Activated T-helper 1 cell treated with anti-CD3 and anti-CD28 coated beads, Interleukin-12 subunit alpha, Interleukin-12 subunit beta, Interleukin-2, Interleukin-4 antibody, amounts not matched to agents 30 ng/mL and 10 ng/mL and 1 ng/mL, durations not matched to agents 14 hours and 24 hours and 36 hours (primary cell): ENCODE measurements at regions of chr17 and their contacts with region 1.

Region 1: GRCh38 chr17:81683584-81684237 is at the starts of genes ARL16 and HGS:
- DNase-seq: peak; percentile 98
- H3K4me3 Mint-ChIP-seq: peak within 1 kb of the TSS; percentile 97
- H3K27ac Mint-ChIP-seq: peak within 1 kb of the TSS; percentile 95
- H3K4me1 Mint-ChIP-seq: peaks cover 22% of the 10 kb centered on the region
- H3K27me3 Mint-ChIP-seq: no peaks in the 10 kb centered on the region
- total RNA-seq, gene ARL16: 37.6 and 40.0 TPM in 2 replicates
- total RNA-seq, gene HGS: 133 and 144 TPM in 2 replicates

Region 2: GRCh38 chr17:81636505-81637288 is 47.0 kb before region 1 on chr17 and contains the starts of genes NPLOC4 and TSPAN10:
- intact Hi-C with region 1: loop called (anchors 1 kb)
- DNase-seq: peak; percentile 81
- H3K4me3 Mint-ChIP-seq: peak within 1 kb of the TSS; percentile 92
- H3K27ac Mint-ChIP-seq: peak within 1 kb of the TSS; percentile 80
- H3K4me1 Mint-ChIP-seq: peaks cover 16% of the 10 kb centered on the region
- H3K27me3 Mint-ChIP-seq: peaks cover 5% of the 10 kb centered on the region
- total RNA-seq, gene NPLOC4: 138 and 157 TPM in 2 replicates
- total RNA-seq, gene TSPAN10: 0.21 and 0.66 TPM in 2 replicates

Region 3: GRCh38 chr17:81666342-81667191 is 17.1 kb before region 1 on chr17 and contains the starts of genes CCDC137 and OXLD1:
- intact Hi-C with region 1: loop called (anchors 1 kb)
- DNase-seq: peak; percentile 93
- H3K4me3 Mint-ChIP-seq: peak within 1 kb of the TSS; percentile 99
- H3K27ac Mint-ChIP-seq: peak within 1 kb of the TSS; percentile 98
- H3K4me1 Mint-ChIP-seq: peaks cover 32% of the 10 kb centered on the region
- H3K27me3 Mint-ChIP-seq: no peaks in the 10 kb centered on the region
- total RNA-seq, gene CCDC137: 59.3 and 62.1 TPM in 2 replicates
- total RNA-seq, gene OXLD1: 54.3 and 57.5 TPM in 2 replicates

Region 4: GRCh38 chr17:81702971-81703746 is 19.4 kb after region 1 on chr17 and contains the start of gene MRPL12:
- intact Hi-C with region 1: loop called (anchors 1 kb)
- DNase-seq: peak; percentile 87
- H3K4me3 Mint-ChIP-seq: peak within 1 kb of the TSS; percentile 98
- H3K27ac Mint-ChIP-seq: peak within 1 kb of the TSS; percentile 97
- H3K4me1 Mint-ChIP-seq: peaks cover 18% of the 10 kb centered on the region
- H3K27me3 Mint-ChIP-seq: no peaks in the 10 kb centered on the region
- total RNA-seq, gene MRPL12: 232 TPM in 2 replicates

Region 5: DNA sequence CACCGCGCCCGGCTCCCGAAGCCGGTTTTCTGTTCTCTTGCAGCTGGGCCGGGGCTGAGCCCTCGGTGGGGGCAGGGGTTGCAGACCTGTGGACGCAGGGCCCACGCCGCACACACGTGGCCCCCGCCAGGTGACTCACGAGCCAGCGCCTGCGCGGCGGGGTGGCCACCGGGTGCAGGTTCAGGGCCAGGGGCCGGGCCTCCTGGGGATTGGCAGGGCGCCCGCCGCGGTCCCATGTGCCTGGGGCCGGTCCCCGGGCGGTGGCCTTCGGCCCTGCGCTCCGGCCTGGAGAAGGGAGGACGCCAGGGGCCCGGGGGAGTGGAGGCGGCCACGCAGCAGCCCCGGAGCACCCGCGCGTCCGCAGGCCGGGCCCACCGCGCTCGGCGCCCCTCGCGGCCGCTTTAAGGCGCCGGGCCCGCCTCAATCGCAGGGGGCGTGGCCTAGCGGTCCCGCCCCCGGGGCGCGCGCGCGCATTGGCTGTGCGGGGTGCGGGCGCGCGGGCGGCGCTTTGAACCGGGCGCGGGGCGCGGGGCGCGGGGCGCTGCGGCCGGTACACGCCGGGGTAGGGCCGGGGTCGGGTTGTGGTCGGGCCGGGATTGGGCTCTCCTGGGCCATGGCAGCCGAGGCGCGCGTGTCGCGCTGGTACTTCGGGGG is 28.2 kb after region 1 on chr17 and contains the start of gene SLC25A10:
- intact Hi-C with region 1: loop called (anchors 1 kb)
- DNase-seq: peak; percentile 81
- H3K4me3 Mint-ChIP-seq: peak within 1 kb of the TSS; percentile 90
- H3K27ac Mint-ChIP-seq: peak within 1 kb of the TSS; percentile 79
- H3K4me1 Mint-ChIP-seq: peaks cover 13% of the 10 kb centered on the region
- H3K27me3 Mint-ChIP-seq: no peaks in the 10 kb centered on the region
- total RNA-seq, gene SLC25A10: 45.7 and 49.6 TPM in 2 replicates

Region 6: DNA sequence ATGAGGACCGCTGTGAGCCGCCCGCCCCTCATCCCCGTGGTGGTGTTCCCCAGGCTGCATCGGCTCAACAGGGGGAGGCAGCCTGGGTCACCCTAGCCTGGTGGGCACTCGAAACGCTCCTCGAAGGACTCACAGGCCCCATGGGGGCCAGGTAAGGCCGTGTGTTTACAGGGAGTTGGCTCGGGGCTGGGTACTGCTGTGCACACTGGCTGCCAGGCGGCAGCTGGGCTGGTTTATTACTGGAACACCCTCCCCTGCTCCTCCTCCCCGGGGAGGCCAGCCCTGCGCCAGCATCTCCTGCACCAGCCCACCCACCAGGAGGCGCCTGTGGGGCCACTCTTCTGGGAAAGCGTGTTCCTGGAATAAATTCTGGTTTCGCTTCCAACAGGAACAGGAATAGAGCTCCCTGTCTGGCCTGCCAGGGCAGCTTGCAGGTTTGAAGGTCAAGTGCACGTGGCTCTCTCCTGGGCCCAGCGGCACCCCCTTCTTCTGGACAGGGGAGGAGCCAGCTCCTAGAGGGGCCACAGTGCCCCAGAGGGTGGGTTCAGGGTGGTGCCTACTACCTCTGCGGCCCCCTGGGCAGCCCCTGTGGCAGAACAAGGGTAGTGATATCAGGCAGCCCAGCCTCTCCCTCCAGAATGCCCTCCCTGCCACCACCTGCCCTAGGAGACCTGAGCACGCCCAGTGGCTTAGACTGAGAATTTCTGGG is 138.0 kb after region 1 on chr17:
- intact Hi-C with region 1: no loop called
- DNase-seq: no peak
- H3K4me3 Mint-ChIP-seq: no peak overlapping the region
- H3K27ac Mint-ChIP-seq: no peak overlapping the region
- H3K4me1 Mint-ChIP-seq: no peaks in the 10 kb centered on the region
- H3K27me3 Mint-ChIP-seq: peaks cover 7% of the 10 kb centered on the region